HEK293T (cell line): ENCODE measurements at regions of chr5 and their contacts with region 1.

Region 1: GRCh38 chr5:174920906-174921550 is 196.6 kb downstream of the MSX2 start:
- DNase-seq: no peak

Region 2: DNA sequence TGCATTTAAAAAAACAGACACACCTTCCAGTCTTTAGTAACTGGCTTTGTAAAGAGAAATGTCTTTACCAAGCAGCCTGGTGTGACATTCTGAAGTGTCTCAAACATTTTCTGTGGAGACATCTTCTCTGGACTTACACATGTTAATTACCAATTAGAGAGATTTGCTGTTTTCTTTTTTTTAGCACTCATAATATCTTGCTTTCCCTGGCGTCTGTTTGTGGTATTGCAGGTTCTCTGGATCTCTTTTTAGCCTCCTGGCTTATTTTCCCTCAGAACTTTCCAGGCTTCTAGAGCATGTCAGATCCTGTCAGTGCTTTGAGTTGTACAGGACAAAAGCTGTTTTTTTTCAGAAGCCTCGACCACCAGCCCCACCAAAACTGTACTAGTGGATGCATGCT is 104.2 kb before region 1 on chr5:
- CTCF ChIA-PET with region 1: no interaction called
- POLR2A ChIA-PET with region 1: no interaction called
- DNase-seq: peak; percentile 53

Region 3: GRCh38 chr5:174910245-174910737 is 10.7 kb before region 1 on chr5:
- CTCF ChIA-PET with region 1: interaction called, 13 read pairs
- POLR2A ChIA-PET with region 1: no interaction called
- DNase-seq: peak; percentile 90